ENCODE measurements at regions of chr11 and their contacts with region 1.

Region 1: DNA sequence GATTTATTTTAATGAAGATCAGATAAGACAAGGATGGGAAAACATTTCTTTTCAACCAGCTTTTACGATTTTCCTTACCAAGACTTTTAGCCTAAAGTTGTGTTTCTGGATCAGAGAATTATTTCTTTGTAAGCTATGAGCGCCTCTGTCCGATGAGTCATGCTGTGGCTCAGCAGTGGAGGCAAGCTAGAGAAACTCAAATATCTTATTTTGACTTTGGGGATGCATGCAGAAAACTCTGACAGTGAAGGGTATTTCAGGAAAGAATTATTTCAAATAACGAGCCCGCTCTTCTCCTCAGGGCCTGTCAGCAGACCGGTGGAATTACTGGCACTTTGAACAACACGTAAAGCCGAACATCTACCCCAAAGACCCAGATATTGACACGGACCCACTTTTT is 77.9 kb upstream of the OR5AK2 start:
- DNase-seq: no peak
- H3K4me3 ChIP-seq: no peak overlapping the region
- H3K4me1 ChIP-seq: no peaks in the 10 kb centered on the region
- H3K27me3 ChIP-seq: no peaks in the 10 kb centered on the region

Region 2: DNA sequence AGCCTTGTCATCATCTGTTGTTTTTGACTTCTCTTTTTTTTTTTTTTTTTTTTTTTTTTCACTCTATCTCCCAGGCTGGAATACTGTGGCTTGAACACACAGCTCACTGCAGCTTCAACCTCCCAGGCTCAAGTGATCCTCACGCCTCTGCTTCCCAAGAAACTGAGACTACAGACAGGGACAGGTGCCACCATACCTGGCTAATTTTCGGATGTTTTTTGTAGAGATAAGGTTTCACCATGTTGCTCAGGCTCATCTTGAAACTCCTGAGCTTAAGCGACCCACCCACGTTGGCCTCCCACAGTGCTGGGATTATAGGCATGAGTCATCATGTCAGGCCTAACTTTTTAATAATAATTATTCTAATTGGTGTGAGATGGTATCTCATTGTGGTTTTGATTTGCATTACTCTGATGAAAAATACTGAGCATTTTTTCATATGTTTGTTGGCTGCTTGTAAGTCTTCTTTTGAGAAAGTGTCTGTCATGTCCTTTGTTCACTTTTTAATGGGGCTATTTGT is 111.0 kb before region 1 on chr11:
- in situ Hi-C with region 1: no loop called
- DNase-seq: no peak
- H3K4me3 ChIP-seq: no peak overlapping the region
- H3K4me1 ChIP-seq: no peaks in the 10 kb centered on the region
- H3K27me3 ChIP-seq: no peaks in the 10 kb centered on the region

Region 3: GRCh38 chr11:57001674-57002401 is 91.1 kb after region 1 on chr11:
- in situ Hi-C with region 1: loop called (anchors 25 kb)
- DNase-seq: peak in 1 of 2 experiments; percentile 6
- H3K4me3 ChIP-seq: no peak overlapping the region
- H3K4me1 ChIP-seq: no peaks in the 10 kb centered on the region
- H3K27me3 ChIP-seq: no peaks in the 10 kb centered on the region

Measured in HAP-1 (cell line).